Breast epithelium (tissue), 4 donors: ENCODE measurements at regions of chr10 and their contacts with region 1.

Region 1: GRCh38 chr10:32367793-32368453 is 21.0 kb upstream of the EPC1 start:
- DNase-seq: peak in 1 of 2 donors; percentile 68
- H3K4me3 ChIP-seq: no peak overlapping the region
- H3K27ac ChIP-seq: no peak overlapping the region
- H3K4me1 ChIP-seq: no peaks in the 10 kb centered on the region
- H3K27me3 ChIP-seq: no peaks in the 10 kb centered on the region
- CTCF ChIP-seq: peak; percentile 76 to 79 (median 76)
- POLR2A ChIP-seq: no peak

Region 2: GRCh38 chr10:31677195-31678138 is 690.5 kb before region 1 on chr10:
- intact Hi-C with region 1: loop called (anchors 10 kb)
- DNase-seq: no peak
- H3K4me3 ChIP-seq: no peak overlapping the region
- H3K27ac ChIP-seq: peak overlapping the region; percentile 50 to 61
- H3K4me1 ChIP-seq: no peaks in the 10 kb centered on the region
- H3K27me3 ChIP-seq: no peaks in the 10 kb centered on the region
- CTCF ChIP-seq: no peak
- POLR2A ChIP-seq: no peak

Region 3: GRCh38 chr10:33094263-33095051 is 726.5 kb after region 1 on chr10:
- intact Hi-C with region 1: no loop called
- DNase-seq: no peak
- H3K4me3 ChIP-seq: no peak overlapping the region
- H3K27ac ChIP-seq: no peak overlapping the region
- H3K4me1 ChIP-seq: no peaks in the 10 kb centered on the region
- H3K27me3 ChIP-seq: no peaks in the 10 kb centered on the region
- CTCF ChIP-seq: no peak
- POLR2A ChIP-seq: no peak